Sigmoid colon (tissue), 7 donors: ENCODE measurements at regions of chr13 and their contacts with region 1.

Region 1: GRCh38 chr13:110950819-110951570 is 36.1 kb upstream of the ANKRD10 start:
- DNase-seq: no peak
- H3K4me3 ChIP-seq: no peak overlapping the region
- H3K27ac ChIP-seq: no peak overlapping the region
- H3K4me1 ChIP-seq: peaks cover 0 to 10% (median 8%) of the 10 kb centered on the region in 4 donors
- H3K27me3 ChIP-seq: no peaks in the 10 kb centered on the region
- CTCF ChIP-seq: no peak
- EP300 ChIP-seq: no peak
- POLR2A ChIP-seq: no peak

Region 2: GRCh38 chr13:109918179-109918711 is 1032.8 kb before region 1 on chr13:
- intact Hi-C with region 1: no loop called
- DNase-seq: no peak
- H3K4me3 ChIP-seq: no peak overlapping the region
- H3K27ac ChIP-seq: no peak overlapping the region
- H3K4me1 ChIP-seq: no peaks in the 10 kb centered on the region
- H3K27me3 ChIP-seq: no peaks in the 10 kb centered on the region
- CTCF ChIP-seq: no peak
- EP300 ChIP-seq: no peak
- POLR2A ChIP-seq: no peak

Region 3: DNA sequence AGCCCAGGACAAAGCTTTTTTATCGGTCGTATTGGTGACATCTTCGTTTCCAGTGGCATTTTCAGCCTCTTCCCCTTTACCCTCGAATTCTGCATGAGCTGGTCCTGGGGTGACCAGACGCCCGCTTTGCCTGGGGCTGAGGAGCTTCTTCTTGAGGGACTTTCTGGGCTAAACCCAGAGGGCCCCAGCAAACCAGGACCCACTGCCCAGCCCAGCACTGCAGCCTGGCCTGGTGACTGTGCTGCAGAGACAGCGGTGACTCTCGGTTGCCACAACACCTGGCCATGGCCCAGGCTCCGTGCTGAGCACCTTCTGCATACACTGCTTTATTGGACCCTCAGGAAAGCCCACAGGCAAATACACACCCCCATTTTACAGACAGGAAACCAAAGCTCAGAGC is 1446.1 kb after region 1 on chr13:
- intact Hi-C with region 1: loop called (anchors 5 kb)
- DNase-seq: no peak
- H3K4me3 ChIP-seq: no peak overlapping the region
- H3K27ac ChIP-seq: no peak overlapping the region
- H3K4me1 ChIP-seq: no peaks in the 10 kb centered on the region
- H3K27me3 ChIP-seq: no peaks in the 10 kb centered on the region
- CTCF ChIP-seq: no peak
- EP300 ChIP-seq: no peak
- POLR2A ChIP-seq: no peak